ENCODE measurements at regions of chr1 and their contacts with region 1.

Region 1: DNA sequence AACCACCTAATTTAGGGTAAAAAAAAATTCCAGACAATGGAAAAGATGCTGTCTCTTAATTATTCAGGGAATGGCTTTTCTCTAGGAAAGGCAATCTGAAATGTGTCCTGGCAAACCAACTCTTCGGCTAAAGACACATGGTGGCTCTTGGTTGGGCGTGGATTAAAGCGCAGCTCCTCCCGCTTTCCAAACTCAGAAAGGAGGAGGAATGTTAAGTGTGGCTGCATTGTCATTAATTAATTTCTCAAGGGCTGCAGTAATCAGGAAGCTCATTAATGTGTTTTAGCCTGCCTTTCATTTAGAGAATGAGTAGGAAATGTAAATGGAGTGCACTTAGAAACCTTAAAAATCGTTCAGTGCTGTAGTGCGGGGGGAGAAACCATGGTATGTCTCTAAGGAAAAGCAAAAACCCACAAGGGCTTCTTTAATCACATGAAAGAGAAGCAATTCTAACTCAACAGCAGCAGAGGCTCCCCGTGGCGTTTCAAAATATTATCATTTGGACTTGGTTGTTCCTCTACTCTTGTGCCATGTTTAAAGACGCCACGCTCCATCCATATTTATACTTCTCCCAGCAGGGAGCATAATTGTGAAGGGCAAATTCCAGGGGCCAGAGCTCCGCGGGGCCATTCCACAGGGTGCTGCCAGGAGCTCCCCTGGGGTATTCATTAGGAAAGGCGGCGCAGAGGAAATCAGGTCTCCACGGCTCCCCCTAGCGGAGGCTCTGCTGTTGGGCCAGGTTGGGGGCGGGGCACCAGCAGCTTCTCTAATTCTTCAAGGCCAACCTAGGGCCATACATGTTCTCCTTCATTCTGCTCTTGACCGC is 91.9 kb upstream of the SSX2IP start:
- DNase-seq: peak; percentile 82
- CTCF ChIP-seq: peak; percentile 84

Region 2: DNA sequence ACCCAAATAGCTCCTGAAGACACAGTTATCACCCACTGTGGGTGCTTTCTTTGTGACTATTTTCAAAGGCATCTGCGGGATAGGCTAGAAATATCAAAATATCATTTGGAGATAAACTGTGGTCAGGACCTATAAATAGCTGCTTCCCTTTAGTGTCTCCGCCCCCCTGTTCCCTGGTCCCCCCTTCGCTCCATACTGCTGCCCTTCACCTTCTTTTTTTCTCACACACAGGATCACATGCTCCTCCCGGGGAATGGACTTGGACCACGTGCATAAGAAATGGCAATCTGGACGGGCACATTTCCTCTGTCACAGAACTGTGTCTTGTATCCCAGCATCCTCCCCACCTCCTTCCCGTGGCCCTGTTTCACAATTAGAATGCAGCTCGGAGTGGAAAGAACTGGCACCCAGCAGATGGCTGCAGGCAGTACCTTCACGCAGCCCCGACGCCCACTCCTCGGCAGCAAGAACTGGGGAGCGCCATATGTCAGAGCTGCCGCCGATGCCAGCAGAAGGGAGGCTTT is 23.1 kb before region 1 on chr1:
- CTCF ChIA-PET with region 1: interaction called, 15 read pairs
- POLR2A ChIA-PET with region 1: no interaction called
- DNase-seq: no peak
- CTCF ChIP-seq: no peak

Region 3: GRCh38 chr1:84795966-84796600 is 13.9 kb after region 1 on chr1:
- CTCF ChIA-PET with region 1: interaction called, 25 read pairs
- POLR2A ChIA-PET with region 1: no interaction called
- DNase-seq: no peak
- CTCF ChIP-seq: no peak

Region 4: DNA sequence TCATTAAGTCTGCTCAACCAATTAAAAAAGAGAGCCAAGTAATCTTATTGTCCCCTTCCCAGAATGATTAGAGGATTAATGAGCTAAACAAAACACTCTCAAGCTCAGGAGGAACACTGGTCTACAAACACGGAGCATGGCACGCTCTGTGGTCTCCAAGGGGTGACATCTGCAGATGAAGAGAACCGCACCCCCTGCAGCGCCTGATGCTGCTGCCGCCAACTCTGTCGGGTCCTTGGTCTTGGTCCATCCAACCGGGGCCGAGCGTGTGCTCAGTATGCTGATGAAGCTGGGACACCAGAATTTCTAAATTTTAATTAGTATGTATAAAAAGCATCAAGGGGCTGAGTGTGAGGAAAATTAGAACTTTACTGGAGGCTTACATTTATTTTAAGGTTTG is 28.2 kb after region 1 on chr1:
- CTCF ChIA-PET with region 1: interaction called, 10 read pairs
- POLR2A ChIA-PET with region 1: no interaction called
- DNase-seq: no peak
- CTCF ChIP-seq: no peak

Region 5: GRCh38 chr1:84936116-84936810 is 154.1 kb after region 1 on chr1:
- CTCF ChIA-PET with region 1: interaction called, 17 read pairs
- POLR2A ChIA-PET with region 1: no interaction called
- DNase-seq: peak; percentile 35
- CTCF ChIP-seq: peak; percentile 88

Measured in GM10248 (cell line).